ENCODE measurements at regions of chr17 and their contacts with region 1.

Region 1: GRCh38 chr17:35432176-35433074 is at the start of gene SLFN12:
- DNase-seq: peak; percentile 70 to 71
- H3K4me3 ChIP-seq: peak within 1 kb of the TSS; percentile 37 to 65 (median 56)
- H3K27ac ChIP-seq: peak within 1 kb of the TSS; percentile 53; the same call in 1 of the 2 replicates
- H3K4me1 ChIP-seq: peaks cover 0 to 14% (median 8%) of the 10 kb centered on the region in 4 experiments; a peak in 6 of 7 replicates
- H3K27me3 ChIP-seq: peaks cover 6 to 35% (median 21%) of the 10 kb centered on the region in 4 experiments
- CTCF ChIP-seq: no peak
- EP300 ChIP-seq: no peak
- POLR2A ChIP-seq: peak; percentile 43 to 86
- RAD21 ChIP-seq: no peak
- total RNA-seq, gene SLFN12: 9.4 and 10.7 TPM in 2 replicates

Region 2: GRCh38 chr17:35448214-35448898 is 15.9 kb after region 1 on chr17 and contains the start of gene SLFN13:
- CTCF ChIA-PET with region 1: interaction called, 4 read pairs
- POLR2A ChIA-PET with region 1: interaction called, 38 read pairs
- DNase-seq: peak; percentile 73 to 84
- H3K4me3 ChIP-seq: peak within 1 kb of the TSS; percentile 42 to 64 (median 52)
- H3K27ac ChIP-seq: peak within 1 kb of the TSS; percentile 71; the same call in 1 of the 2 replicates
- H3K4me1 ChIP-seq: peaks cover 0 to 4% (median 4%) of the 10 kb centered on the region in 4 experiments; a peak in 5 of 7 replicates
- H3K27me3 ChIP-seq: peaks cover 7 to 57% (median 40%) of the 10 kb centered on the region in 4 experiments
- CTCF ChIP-seq: no peak
- EP300 ChIP-seq: no peak
- POLR2A ChIP-seq: peak; percentile 56 to 85
- RAD21 ChIP-seq: no peak; a peak in 1 of 4 replicates
- total RNA-seq, gene SLFN13: 27.5 and 28.1 TPM in 2 replicates

Measured in H1 (cell line).